ENCODE measurements at regions of chr10 and their contacts with region 1.

Region 1: DNA sequence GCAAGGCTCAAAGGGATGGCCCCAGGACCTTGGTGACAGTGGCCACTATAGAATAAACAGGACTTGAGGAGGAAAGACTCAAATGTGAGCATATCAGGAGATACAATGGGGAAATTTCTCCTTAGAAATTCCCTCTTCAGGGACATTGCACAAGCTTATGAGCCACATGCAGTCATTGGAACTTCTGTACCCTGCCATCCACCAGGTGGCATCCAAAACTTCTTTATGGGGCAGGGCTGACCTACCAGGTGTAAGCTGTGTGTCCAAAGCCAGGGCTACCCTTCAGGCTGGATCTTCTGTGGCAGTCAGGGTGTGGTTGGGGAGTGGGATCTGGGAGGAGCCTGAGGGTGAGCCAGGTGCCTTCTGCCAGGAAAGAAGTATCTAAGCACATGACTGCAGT is 36.6 kb upstream of the LRRC18 start:
- DNase-seq: no peak
- ATAC-seq: no peak
- H3K4me3 ChIP-seq: no peak overlapping the region
- H3K27ac ChIP-seq: no peak overlapping the region
- H3K4me1 ChIP-seq: no peaks in the 10 kb centered on the region
- H3K27me3 ChIP-seq: no peaks in the 10 kb centered on the region
- CTCF ChIP-seq: peak in 1 of 5 experiments; percentile 35
- POLR2A ChIP-seq: no peak

Region 2: DNA sequence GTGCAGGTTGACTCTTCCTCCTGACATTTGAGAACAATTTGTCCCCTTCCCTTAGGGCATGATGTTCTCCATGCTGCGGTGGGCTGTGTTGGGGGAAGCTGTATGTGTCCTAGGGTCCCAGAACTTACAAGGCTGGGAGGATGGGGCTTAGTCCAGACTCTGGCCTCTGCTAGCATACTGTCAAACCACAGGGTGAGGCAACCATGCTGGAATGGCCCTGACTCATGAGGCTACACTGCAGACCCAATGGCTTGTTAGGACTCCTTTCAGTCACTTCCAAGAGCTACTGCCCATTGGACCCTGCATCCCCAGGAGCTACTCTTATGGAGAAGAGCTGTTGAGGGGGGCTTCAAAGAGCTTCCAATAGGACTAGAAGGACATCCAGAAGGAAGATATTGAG is 177.8 kb after region 1 on chr10:
- in situ Hi-C with region 1: loop called in 1 of 4 experiments (anchors 10 kb)
- intact Hi-C with region 1: no loop called
- DNase-seq: no peak
- ATAC-seq: no peak
- H3K4me3 ChIP-seq: no peak overlapping the region
- H3K27ac ChIP-seq: no peak overlapping the region
- H3K4me1 ChIP-seq: no peaks in the 10 kb centered on the region
- H3K27me3 ChIP-seq: no peaks in the 10 kb centered on the region
- CTCF ChIP-seq: no peak
- POLR2A ChIP-seq: no peak

Measured in gastrocnemius medialis (tissue), 4 donors.